ENCODE measurements at regions of chr17 and their contacts with region 1.

Region 1: GRCh38 chr17:18025945-18026776 is 12.8 kb downstream of the ATPAF2 start:
- DNase-seq: peak; percentile 97
- H3K4me3 ChIP-seq: no peak overlapping the region
- H3K27ac ChIP-seq: peak overlapping the region; percentile 87
- H3K4me1 ChIP-seq: peaks cover 23% of the 10 kb centered on the region
- H3K27me3 ChIP-seq: no peaks in the 10 kb centered on the region

Region 2: GRCh38 chr17:17890773-17891759 is 135.1 kb before region 1 on chr17:
- in situ Hi-C with region 1: loop called (anchors 10 kb)
- DNase-seq: peak; percentile 77
- H3K4me3 ChIP-seq: no peak overlapping the region
- H3K27ac ChIP-seq: no peak overlapping the region
- H3K4me1 ChIP-seq: no peaks in the 10 kb centered on the region
- H3K27me3 ChIP-seq: no peaks in the 10 kb centered on the region

Measured in GM23248 (cell line).